Activated naive CD4-positive, alpha-beta T cell treated with anti-CD3 and anti-CD28 coated beads for 36 hours (primary cell): ENCODE measurements at regions of chr11 and their contacts with region 1.

Region 1: GRCh38 chr11:13450832-13451397 is 12.1 kb downstream of the BTBD10 start:
- DNase-seq: no peak
- H3K4me3 Mint-ChIP-seq: no peak overlapping the region
- H3K27ac Mint-ChIP-seq: no peak overlapping the region
- H3K4me1 Mint-ChIP-seq: peaks cover 30% of the 10 kb centered on the region
- H3K27me3 Mint-ChIP-seq: no peaks in the 10 kb centered on the region

Region 2: DNA sequence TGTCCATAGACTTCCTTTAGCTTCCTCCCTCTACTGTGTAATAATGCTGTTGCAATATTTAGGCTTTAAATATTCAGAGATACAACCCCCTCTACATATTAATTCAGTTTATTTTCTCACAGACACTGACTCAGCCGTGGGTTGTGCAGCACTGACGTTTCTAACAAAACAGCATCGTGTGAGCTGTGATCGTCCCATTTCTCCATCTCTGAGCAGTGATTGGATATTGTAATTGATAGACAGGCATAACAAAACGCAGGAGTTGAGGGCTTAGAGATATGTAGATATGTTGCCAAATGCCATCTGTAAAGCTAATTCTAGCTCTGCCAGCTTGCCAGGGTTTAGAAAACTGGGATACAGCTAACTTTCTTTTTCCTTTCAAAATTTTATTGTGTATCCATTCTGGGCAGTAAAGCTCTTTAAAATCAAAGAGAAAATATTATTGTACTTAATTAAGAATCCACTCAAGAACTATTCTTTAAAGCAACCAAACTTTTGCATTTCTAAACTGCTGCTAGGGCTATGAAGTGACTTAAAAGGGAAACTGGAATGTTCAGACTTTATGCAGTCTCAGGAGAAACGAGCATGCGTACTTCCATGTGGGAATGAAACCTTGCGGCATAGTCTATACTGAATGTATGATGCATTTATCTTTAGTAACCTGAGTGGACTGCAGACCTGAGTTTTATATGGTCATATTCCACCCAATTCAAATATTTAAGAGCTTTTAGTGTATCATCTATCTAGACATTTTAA is 10.6 kb before region 1 on chr11:
- CTCF ChIA-PET with region 1: no interaction called
- intact Hi-C with region 1: loop called (anchors 2 kb)
- DNase-seq: no peak
- H3K4me3 Mint-ChIP-seq: no peak overlapping the region
- H3K27ac Mint-ChIP-seq: no peak overlapping the region
- H3K4me1 Mint-ChIP-seq: peaks cover 23% of the 10 kb centered on the region
- H3K27me3 Mint-ChIP-seq: no peaks in the 10 kb centered on the region